ENCODE measurements at regions of chrX and their contacts with region 1.

Region 1: DNA sequence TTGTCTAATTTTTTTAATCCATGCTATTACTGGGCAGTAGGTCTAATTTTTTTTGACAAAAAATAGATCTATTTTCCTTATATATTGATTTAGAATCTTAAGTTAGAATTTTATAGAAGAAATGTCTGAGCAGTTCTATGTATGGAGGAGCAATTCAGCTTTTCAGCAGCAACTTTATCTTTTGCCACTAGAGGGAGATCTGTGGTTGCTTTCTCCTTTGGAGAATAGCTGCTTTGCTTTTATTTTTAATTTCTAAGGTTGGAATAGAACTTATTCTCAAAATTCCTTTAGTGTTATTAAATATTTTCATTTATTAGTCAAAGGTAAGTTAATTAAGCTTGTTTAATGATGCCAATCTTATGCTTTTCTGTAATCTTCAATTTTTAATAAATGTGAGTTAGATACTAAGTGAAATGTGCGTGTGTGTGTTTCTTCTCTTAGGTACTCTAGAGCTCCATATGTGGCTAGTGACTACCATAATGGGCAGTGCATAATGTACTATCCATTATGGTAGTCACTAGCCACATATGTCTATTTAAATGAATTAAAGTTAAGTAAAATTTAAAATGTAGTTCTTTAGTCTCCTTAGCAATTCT is 29.3 kb downstream of the FAM199X start:
- DNase-seq: peak; percentile 4
- ATAC-seq: peak; percentile 44
- H3K4me3 Mint-ChIP-seq: no peak overlapping the region
- H3K27ac Mint-ChIP-seq: no peak overlapping the region
- H3K4me1 Mint-ChIP-seq: peaks cover 2% of the 10 kb centered on the region
- H3K27me3 Mint-ChIP-seq: no peaks in the 10 kb centered on the region

Region 2: DNA sequence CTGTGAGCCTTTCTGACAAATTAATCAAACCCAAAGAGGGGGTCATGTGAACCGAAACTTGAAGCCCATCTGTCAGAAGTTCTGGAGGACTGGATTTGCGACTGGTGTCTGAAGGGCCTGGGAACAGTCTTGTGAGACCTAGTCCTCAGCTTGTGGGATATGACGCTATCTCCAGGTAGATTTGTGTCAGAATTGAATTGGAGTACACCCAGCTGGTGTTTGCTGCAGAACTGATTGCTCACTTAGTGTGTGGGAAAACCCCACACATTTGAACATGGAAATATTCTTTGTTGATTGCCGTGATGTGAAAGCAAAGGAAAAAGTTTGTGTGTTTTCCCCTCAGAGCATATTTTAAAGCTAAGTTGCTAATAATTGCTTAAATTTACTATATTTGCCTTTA is 263.5 kb before region 1 on chrX:
- CTCF ChIA-PET with region 1: no interaction called
- POLR2A ChIA-PET with region 1: no interaction called
- intact Hi-C with region 1: no loop called
- DNase-seq: no peak
- ATAC-seq: peak; percentile 83
- H3K4me3 Mint-ChIP-seq: no peak overlapping the region
- H3K27ac Mint-ChIP-seq: no peak overlapping the region
- H3K4me1 Mint-ChIP-seq: peaks cover 4% of the 10 kb centered on the region
- H3K27me3 Mint-ChIP-seq: no peaks in the 10 kb centered on the region

Region 3: GRCh38 chrX:104173841-104174240 is 21.7 kb before region 1 on chrX:
- CTCF ChIA-PET with region 1: interaction called, 10 read pairs
- POLR2A ChIA-PET with region 1: no interaction called
- intact Hi-C with region 1: no loop called
- DNase-seq: no peak
- ATAC-seq: no peak
- H3K4me3 Mint-ChIP-seq: no peak overlapping the region
- H3K27ac Mint-ChIP-seq: no peak overlapping the region
- H3K4me1 Mint-ChIP-seq: peaks cover 11% of the 10 kb centered on the region
- H3K27me3 Mint-ChIP-seq: no peaks in the 10 kb centered on the region

Region 4: DNA sequence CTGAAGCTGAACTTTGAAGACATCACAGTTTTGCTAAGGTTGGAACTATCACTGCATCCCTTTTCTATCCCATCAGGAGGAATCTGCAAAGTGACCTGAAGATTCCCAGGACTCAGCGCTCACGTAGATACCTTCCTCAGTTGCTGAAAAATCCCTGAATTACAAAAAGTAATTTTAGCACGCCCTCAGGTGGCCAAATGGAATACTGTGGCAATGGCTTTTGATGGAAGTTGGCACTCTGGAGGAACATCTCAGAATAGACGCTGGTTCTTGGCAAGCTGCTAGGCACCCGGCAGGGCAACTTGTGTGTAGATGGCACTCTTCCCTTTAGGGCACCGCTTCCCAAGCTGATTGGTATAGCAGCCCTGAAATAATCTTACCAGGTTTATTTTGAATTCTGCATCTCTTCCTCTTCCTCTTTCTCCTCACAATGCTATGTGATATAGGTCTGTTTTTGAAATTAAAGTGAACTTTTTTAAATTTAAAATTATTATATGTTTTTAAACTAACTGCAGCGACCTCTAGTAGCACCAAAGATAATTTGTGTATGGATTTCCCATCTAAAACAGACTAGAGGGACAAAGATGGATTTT is 75.4 kb after region 1 on chrX:
- CTCF ChIA-PET with region 1: interaction called, 12 read pairs
- POLR2A ChIA-PET with region 1: no interaction called
- intact Hi-C with region 1: loop called (anchors 1 kb)
- DNase-seq: peak; percentile 59
- ATAC-seq: no peak
- H3K4me3 Mint-ChIP-seq: peak overlapping the region; percentile 40
- H3K27ac Mint-ChIP-seq: no peak overlapping the region
- H3K4me1 Mint-ChIP-seq: peaks cover 5% of the 10 kb centered on the region
- H3K27me3 Mint-ChIP-seq: peaks cover 12% of the 10 kb centered on the region

Region 5: DNA sequence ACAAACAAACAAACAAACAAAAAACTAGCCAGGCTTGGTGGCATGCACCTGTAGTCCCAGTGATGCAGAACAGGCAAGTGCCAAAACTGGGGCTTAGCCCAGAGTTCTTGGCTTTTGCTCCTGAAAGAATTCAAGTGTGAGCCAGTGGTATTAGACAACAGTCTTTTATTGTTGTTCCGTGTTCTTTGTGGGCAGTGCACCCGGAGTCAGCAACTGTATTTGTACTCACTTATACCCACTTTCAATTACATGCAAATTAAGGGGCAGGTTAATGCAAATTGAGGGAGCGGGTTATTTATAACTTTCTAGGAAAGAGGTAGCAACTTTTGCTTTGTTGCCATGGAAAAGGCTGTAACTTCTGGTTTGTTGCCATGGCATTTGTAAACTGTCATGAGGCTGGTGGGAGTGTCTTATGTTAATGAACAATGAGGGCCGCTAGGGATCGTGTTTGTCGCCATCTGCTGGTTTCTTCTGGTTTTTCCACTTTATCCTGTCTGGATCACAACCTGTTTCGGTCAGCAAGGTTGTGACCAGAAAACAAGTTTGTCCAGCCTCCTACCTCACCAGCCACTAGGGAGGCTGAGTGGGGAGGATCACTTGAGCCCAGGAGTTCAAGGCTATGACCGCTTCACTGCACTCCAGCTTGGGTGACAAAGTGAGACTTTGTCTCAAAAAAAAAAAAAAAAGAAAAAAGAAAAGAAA is 148.0 kb after region 1 on chrX:
- CTCF ChIA-PET with region 1: no interaction called
- POLR2A ChIA-PET with region 1: no interaction called
- intact Hi-C with region 1: loop called in 1 of 2 experiments (anchors 2 kb)
- DNase-seq: peak; percentile 54
- ATAC-seq: no peak
- H3K4me3 Mint-ChIP-seq: no peak overlapping the region
- H3K27ac Mint-ChIP-seq: no peak overlapping the region
- H3K4me1 Mint-ChIP-seq: no peaks in the 10 kb centered on the region
- H3K27me3 Mint-ChIP-seq: peaks cover 2% of the 10 kb centered on the region